ENCODE measurements at regions of chr1 and their contacts with region 1.

Region 1: GRCh38 chr1:93751377-93752250 is 70.0 kb upstream of the BCAR3 start:
- DNase-seq: peak; percentile 62
- ATAC-seq: peak; percentile 87 to 93

Region 2: DNA sequence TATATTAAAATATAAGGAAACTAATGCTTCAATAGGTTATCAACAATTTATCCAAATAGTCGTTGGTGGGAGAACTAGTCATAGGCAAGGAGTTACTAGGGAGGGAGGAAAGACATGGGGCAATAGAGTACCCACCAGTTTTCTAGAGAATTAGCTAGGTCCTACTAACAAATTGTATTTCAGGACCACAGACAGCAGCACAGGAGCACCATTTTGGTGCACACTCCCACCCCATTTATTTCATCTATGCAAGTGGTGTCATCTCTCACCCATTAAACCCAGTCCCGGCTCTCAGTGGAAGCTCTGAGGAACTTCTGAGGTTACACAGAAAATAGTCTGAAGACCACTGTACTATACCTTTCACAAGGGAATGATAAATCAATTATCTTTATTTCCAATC is 19.0 kb after region 1 on chr1:
- intact Hi-C with region 1: loop called in 1 of 2 experiments (anchors 2 kb)
- DNase-seq: no peak
- ATAC-seq: no peak

Measured in left cardiac atrium (tissue), 4 donors.